Left cardiac atrium (tissue), 4 donors: ENCODE measurements at regions of chr3 and their contacts with region 1.

Region 1: GRCh38 chr3:139380575-139380974 is 8.9 kb downstream of the COPB2 start:
- DNase-seq: no peak
- ATAC-seq: no peak

Region 2: DNA sequence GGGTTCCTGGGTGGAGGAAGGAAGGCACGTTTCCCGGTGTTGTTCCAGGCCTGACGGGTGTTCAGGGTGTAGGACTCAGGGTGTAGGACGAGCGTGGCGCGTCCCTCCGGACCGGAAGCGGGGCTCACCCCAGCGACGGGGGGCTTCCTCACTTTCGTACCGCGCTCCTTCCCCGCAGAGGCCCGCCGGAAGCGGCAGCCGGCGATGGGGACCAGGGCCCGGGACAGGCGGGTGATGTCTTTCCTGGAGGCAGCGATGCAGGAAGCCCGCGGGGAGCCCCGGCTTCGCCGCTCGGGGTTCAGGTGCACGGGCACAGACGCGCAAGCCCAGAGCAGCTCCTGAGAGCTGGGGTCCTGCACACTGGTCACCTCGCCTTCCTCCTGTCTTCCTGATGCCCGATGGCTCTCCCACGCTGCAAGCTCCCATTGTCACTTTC is 420.1 kb before region 1 on chr3:
- intact Hi-C with region 1: no loop called
- DNase-seq: no peak
- ATAC-seq: no peak

Region 3: DNA sequence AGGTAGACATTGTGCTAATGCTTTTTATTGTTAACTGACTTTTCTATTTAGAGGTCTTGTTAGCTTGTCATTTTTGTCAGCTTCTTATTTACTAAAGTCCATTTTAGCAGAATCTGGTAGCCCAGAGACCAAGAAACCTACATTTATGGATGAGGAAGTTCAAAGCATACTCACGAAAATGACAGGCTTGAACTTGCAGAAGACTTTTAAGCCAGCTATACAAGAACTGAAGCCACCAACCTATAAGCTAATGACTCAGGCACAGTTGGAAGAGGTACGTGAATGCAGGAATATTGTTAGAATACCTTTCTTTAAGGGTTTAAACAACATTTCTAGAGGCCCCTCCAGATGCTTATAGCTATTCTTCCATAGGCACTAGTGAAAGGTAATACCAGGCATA is 33.8 kb before region 1 on chr3:
- intact Hi-C with region 1: loop called in 1 of 2 experiments (anchors 5 kb)
- DNase-seq: no peak
- ATAC-seq: no peak